ENCODE measurements at regions of chr4 and their contacts with region 1.

Region 1: DNA sequence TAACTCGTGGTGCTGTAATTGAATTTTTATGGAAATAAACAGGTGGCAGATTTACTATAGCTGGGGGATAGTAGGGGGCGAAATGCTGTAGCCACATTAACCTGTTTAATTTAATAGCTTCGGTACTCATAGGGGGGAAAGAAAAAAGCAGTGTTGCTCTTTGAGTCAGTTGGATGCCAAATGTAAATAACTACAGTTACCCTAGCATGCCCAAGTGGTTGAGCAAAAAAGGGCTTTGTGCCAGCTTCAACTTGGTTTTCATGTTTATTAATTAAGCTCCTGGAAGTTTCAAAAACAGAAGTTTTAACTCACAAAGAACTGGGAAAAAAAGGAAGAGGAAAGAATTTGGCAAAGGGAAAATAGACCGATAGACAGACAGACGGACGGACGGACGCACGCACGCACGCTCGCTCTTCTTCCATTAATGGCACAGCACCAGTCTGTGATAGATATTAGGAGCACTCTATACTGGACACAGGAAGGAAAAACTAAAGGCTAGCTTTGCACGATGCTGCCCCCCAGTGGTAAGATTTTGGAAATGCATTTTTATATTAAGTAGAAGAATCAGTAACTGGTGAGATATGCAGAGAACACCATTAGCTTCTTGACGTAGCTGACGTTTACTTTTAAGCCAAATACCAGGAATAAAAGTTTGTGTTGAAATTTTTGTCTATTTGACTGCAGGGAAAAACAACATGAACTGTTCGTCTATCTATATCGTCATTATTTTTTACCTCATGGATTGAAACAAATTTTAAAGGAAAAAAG is 151.8 kb downstream of the SLC7A11 start:
- DNase-seq: peak; percentile 59 to 79
- H3K4me3 ChIP-seq: no peak overlapping the region; the same call in 1 of the 2 replicates
- H3K4me3 Mint-ChIP-seq: peak overlapping the region; percentile 69
- H3K27ac Mint-ChIP-seq: no peak overlapping the region
- H3K4me1 ChIP-seq: peaks cover 10% of the 10 kb centered on the region; the same call in 1 of the 2 replicates
- H3K4me1 Mint-ChIP-seq: peaks cover 21% of the 10 kb centered on the region
- H3K27me3 ChIP-seq: no peaks in the 10 kb centered on the region
- H3K27me3 Mint-ChIP-seq: no peaks in the 10 kb centered on the region
- CTCF ChIP-seq: peak; percentile 55 to 71

Region 2: GRCh38 chr4:137735561-137736104 is 354.7 kb before region 1 on chr4:
- CTCF ChIA-PET with region 1: no interaction called
- POLR2A ChIA-PET with region 1: no interaction called
- intact Hi-C with region 1: loop called (anchors 5 kb)
- DNase-seq: no peak
- H3K4me3 ChIP-seq: no peak overlapping the region
- H3K4me3 Mint-ChIP-seq: no peak overlapping the region
- H3K27ac Mint-ChIP-seq: no peak overlapping the region
- H3K4me1 ChIP-seq: no peaks in the 10 kb centered on the region
- H3K4me1 Mint-ChIP-seq: peaks cover 6% of the 10 kb centered on the region
- H3K27me3 ChIP-seq: no peaks in the 10 kb centered on the region
- H3K27me3 Mint-ChIP-seq: no peaks in the 10 kb centered on the region
- CTCF ChIP-seq: no peak

Region 3: DNA sequence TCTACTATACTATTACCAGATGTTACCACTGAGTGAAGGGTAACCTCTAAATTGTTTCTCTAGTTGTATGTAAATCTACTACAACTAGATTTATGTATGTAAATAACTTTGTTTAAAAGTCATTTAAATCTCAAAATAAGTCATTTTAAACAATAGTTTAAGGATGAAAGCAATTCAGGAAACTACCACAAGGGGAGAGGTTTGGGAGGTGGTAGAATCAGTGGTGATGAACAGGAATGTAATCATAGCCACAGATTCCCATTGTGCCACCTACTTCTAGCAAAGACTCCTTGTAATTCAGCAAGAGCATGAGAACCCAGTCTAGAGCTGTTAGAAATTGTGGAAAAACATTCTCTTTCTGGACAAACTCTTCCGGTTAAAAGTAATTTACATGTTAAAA is 82.8 kb before region 1 on chr4:
- CTCF ChIA-PET with region 1: no interaction called
- POLR2A ChIA-PET with region 1: no interaction called
- intact Hi-C with region 1: loop called (anchors 1 kb)
- DNase-seq: no peak
- H3K4me3 ChIP-seq: no peak overlapping the region
- H3K4me3 Mint-ChIP-seq: no peak overlapping the region
- H3K27ac Mint-ChIP-seq: no peak overlapping the region
- H3K4me1 ChIP-seq: no peaks in the 10 kb centered on the region
- H3K4me1 Mint-ChIP-seq: no peaks in the 10 kb centered on the region
- H3K27me3 ChIP-seq: no peaks in the 10 kb centered on the region
- H3K27me3 Mint-ChIP-seq: peaks cover 6% of the 10 kb centered on the region
- CTCF ChIP-seq: peak in 1 of 2 experiments; percentile 41

Region 4: DNA sequence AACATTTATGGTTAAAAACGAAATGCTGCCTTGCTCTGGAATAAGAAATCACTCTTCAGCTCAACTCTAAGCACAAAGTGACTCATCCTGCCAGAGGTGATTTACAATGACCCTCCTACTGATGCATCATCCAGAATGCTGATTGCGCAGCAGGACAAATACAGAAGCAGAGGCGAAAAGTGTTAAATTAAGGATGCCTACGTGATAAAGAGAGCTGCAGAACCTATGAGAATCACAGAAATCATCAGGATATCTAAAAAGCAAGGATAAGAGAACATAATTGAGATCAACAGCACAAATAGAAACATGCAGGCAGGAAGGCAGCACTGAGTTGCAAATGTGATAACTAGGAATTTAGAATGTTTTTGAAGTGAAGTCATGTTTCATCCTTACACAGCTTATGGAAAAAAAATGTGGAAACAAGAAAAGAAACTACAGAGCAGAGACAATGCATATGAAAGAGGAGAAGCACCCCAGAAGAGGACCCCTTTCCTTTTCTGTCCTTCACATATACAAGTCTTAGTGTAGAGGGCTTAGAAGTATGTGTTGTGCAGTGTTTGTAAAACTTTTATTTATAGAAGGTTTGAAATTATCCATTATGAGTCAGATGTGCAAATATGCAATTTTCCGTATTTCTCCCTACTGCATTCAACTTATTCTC is 36.6 kb before region 1 on chr4:
- CTCF ChIA-PET with region 1: no interaction called
- POLR2A ChIA-PET with region 1: no interaction called
- intact Hi-C with region 1: loop called (anchors 2 kb)
- DNase-seq: peak in 1 of 2 experiments; percentile 11
- H3K4me3 ChIP-seq: no peak overlapping the region
- H3K4me3 Mint-ChIP-seq: peak overlapping the region; percentile 10
- H3K27ac Mint-ChIP-seq: no peak overlapping the region
- H3K4me1 ChIP-seq: no peaks in the 10 kb centered on the region
- H3K4me1 Mint-ChIP-seq: peaks cover 6% of the 10 kb centered on the region
- H3K27me3 ChIP-seq: no peaks in the 10 kb centered on the region
- H3K27me3 Mint-ChIP-seq: no peaks in the 10 kb centered on the region
- CTCF ChIP-seq: no peak

Region 5: GRCh38 chr4:138222046-138222445 is 131.7 kb after region 1 on chr4:
- CTCF ChIA-PET with region 1: no interaction called
- POLR2A ChIA-PET with region 1: no interaction called
- intact Hi-C with region 1: no loop called
- DNase-seq: no peak
- H3K4me3 ChIP-seq: no peak overlapping the region
- H3K4me3 Mint-ChIP-seq: no peak overlapping the region
- H3K27ac Mint-ChIP-seq: no peak overlapping the region
- H3K4me1 ChIP-seq: peaks cover 1% of the 10 kb centered on the region; the same call in 1 of the 2 replicates
- H3K4me1 Mint-ChIP-seq: peaks cover 8% of the 10 kb centered on the region
- H3K27me3 ChIP-seq: no peaks in the 10 kb centered on the region
- H3K27me3 Mint-ChIP-seq: no peaks in the 10 kb centered on the region
- CTCF ChIP-seq: no peak

Region 6: GRCh38 chr4:138576684-138577083 is 486.4 kb after region 1 on chr4:
- CTCF ChIA-PET with region 1: no interaction called
- POLR2A ChIA-PET with region 1: no interaction called
- intact Hi-C with region 1: loop called (anchors 5 kb)
- DNase-seq: peak in 1 of 2 experiments; percentile 33
- H3K4me3 ChIP-seq: no peak overlapping the region
- H3K4me3 Mint-ChIP-seq: no peak overlapping the region
- H3K27ac Mint-ChIP-seq: no peak overlapping the region
- H3K4me1 ChIP-seq: no peaks in the 10 kb centered on the region
- H3K4me1 Mint-ChIP-seq: no peaks in the 10 kb centered on the region
- H3K27me3 ChIP-seq: no peaks in the 10 kb centered on the region
- H3K27me3 Mint-ChIP-seq: no peaks in the 10 kb centered on the region
- CTCF ChIP-seq: peak; percentile 47 to 63

Region 7: GRCh38 chr4:138919094-138919936 is 829.0 kb after region 1 on chr4:
- CTCF ChIA-PET with region 1: no interaction called
- POLR2A ChIA-PET with region 1: no interaction called
- intact Hi-C with region 1: loop called (anchors 10 kb)
- DNase-seq: peak; percentile 72 to 78
- H3K4me3 ChIP-seq: no peak overlapping the region
- H3K4me3 Mint-ChIP-seq: peak overlapping the region; percentile 42
- H3K27ac Mint-ChIP-seq: no peak overlapping the region
- H3K4me1 ChIP-seq: no peaks in the 10 kb centered on the region
- H3K4me1 Mint-ChIP-seq: peaks cover 10% of the 10 kb centered on the region
- H3K27me3 ChIP-seq: no peaks in the 10 kb centered on the region
- H3K27me3 Mint-ChIP-seq: no peaks in the 10 kb centered on the region
- CTCF ChIP-seq: peak; percentile 65 to 77

Measured in Caco-2 (cell line).